Left cardiac atrium (tissue), 4 donors: ENCODE measurements at regions of chr11 and their contacts with region 1.

Region 1: GRCh38 chr11:109939166-109939810 is 153.9 kb upstream of the ZC3H12C start:
- DNase-seq: no peak
- ATAC-seq: peak; percentile 77 to 86

Region 2: GRCh38 chr11:109853156-109853776 is 86.0 kb before region 1 on chr11:
- intact Hi-C with region 1: loop called in 1 of 2 experiments (anchors 10 kb)
- DNase-seq: no peak
- ATAC-seq: no peak